ENCODE measurements at regions of chr19 and their contacts with region 1.

Region 1: GRCh38 chr19:45862564-45863334 is at the start of gene SYMPK:
- DNase-seq: peak; percentile 100
- H3K4me3 Mint-ChIP-seq: peak within 1 kb of the TSS; percentile 90
- H3K27ac Mint-ChIP-seq: peak within 1 kb of the TSS; percentile 97
- H3K4me1 Mint-ChIP-seq: peaks cover 24% of the 10 kb centered on the region
- H3K27me3 Mint-ChIP-seq: peaks cover 36% of the 10 kb centered on the region
- total RNA-seq, gene SYMPK: 124 and 131 TPM in 2 replicates

Region 2: DNA sequence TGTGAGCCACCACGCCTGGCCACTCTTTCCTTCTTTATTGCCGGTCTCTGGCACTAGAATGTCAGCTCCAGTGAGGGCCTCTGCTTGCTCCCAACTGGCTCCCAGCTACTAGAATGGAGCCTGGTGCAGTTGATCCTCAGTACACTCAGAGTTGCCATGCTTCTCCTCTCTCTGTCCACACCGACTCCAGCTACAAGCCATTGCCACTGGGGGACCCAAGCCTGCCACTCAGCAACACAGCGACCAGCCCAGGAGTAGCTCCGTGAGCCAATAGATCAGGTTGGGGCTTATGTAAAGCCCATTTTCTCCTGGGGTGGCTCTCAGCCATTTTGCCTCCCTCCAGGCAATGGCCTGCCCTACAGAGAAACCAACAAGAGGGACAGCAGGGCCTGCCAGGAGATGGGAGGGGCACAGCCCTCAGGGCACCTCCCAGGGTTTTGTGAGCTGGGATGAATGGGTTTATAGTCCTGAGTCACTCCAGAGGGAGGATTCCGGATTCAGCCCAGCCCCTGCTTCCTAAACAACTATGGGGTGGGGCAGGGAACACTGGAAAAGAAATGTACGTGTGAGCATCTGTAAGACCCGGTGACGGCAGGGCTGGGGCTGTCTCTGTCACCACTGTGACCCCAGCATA is 314.7 kb before region 1 on chr19:
- intact Hi-C with region 1: no loop called
- DNase-seq: no peak
- H3K4me3 Mint-ChIP-seq: no peak overlapping the region
- H3K27ac Mint-ChIP-seq: no peak overlapping the region
- H3K4me1 Mint-ChIP-seq: peaks cover 6% of the 10 kb centered on the region
- H3K27me3 Mint-ChIP-seq: no peaks in the 10 kb centered on the region

Region 3: DNA sequence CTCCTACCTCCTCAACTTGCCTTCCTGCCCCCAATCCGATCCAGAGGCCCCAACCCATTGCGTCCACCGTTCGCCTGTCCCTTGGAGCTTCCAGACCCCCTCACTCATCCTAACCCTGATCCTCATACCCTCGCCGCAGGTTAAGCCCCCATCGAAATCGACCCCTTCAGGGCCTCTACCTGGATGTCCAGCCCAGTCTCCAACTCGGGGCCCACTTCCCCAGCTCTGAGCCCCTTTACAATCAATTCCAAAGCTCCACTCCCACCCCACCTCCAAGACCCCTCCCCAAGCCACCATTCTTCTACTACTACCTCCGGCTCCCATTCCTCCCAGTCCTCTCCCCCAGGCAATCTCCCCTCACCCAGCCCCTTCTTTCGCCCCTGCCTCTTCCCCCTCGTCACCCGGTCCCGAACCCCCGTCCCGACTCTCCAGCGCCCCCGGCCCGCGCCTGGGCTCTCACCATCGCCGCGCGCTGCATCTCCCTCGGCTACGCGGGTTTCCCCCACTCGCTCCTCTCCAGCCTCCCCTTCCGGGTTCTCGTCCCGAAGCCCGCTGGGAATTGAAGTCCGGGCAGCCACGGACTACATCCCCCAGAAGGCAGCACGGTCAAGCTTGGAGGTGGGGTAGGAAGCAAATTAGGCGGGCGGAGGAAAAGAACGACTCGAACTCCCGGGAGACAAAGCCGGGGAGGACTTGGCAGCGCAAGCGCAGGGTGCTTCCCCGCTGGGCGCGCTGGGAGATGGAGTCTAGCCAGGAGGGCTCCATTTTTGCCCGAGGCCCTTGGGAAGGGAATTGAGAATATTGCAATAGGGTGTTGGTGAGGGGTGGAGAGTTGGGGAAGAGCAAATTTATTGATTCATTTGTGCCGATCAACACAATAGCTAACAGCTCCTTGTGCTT is 132.1 kb before region 1 on chr19 and contains the start of gene FBXO46:
- intact Hi-C with region 1: loop called (anchors 2 kb)
- DNase-seq: peak; percentile 99
- H3K4me3 Mint-ChIP-seq: peak within 1 kb of the TSS; percentile 95
- H3K27ac Mint-ChIP-seq: peak within 1 kb of the TSS; percentile 88
- H3K4me1 Mint-ChIP-seq: peaks cover 25% of the 10 kb centered on the region
- H3K27me3 Mint-ChIP-seq: no peaks in the 10 kb centered on the region
- total RNA-seq, gene FBXO46: 34.2 and 34.7 TPM in 2 replicates

Region 4: DNA sequence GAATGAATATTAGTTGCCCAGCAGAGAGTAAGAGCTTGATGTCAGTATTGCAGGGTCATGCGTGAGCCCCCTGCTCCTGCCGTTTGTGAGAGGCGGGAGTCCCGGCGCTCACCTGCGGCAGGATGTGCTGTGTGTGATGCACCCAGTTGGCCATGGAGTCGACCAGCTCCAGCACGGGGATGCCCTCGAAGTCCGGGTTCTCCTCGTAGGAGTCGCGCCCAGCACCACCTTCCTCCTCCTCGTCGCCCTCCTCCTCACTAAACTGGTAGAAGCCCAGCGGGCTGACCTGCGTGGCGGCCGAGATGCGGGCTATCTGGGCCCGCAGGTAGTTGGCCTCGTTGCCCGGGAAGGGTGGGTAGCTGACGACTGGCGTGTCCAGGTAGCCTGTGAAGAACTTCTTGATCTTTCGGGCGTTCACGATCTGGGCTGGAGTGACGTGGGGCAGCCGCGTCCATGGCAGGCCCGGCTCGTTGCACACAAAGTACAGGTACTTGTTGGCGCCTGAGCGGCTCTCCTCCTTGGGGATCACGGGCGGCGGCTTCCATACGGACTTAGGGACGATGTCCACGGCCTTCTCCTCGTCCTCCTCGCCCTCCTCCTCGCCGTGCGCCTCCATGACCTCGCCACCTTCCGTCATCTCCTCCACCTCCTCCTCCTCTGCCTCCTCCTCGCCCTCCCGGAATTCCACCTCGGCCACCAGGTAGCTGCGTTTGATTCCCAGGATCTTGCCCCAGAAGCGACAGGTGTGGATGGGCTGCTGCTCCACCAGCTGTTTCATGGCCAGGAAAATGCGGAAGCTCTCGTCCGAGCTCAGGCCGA is 58.4 kb before region 1 on chr19:
- intact Hi-C with region 1: no loop called
- DNase-seq: no peak
- H3K4me3 Mint-ChIP-seq: no peak overlapping the region
- H3K27ac Mint-ChIP-seq: no peak overlapping the region
- H3K4me1 Mint-ChIP-seq: peaks cover 4% of the 10 kb centered on the region
- H3K27me3 Mint-ChIP-seq: peaks cover 27% of the 10 kb centered on the region

Region 5: DNA sequence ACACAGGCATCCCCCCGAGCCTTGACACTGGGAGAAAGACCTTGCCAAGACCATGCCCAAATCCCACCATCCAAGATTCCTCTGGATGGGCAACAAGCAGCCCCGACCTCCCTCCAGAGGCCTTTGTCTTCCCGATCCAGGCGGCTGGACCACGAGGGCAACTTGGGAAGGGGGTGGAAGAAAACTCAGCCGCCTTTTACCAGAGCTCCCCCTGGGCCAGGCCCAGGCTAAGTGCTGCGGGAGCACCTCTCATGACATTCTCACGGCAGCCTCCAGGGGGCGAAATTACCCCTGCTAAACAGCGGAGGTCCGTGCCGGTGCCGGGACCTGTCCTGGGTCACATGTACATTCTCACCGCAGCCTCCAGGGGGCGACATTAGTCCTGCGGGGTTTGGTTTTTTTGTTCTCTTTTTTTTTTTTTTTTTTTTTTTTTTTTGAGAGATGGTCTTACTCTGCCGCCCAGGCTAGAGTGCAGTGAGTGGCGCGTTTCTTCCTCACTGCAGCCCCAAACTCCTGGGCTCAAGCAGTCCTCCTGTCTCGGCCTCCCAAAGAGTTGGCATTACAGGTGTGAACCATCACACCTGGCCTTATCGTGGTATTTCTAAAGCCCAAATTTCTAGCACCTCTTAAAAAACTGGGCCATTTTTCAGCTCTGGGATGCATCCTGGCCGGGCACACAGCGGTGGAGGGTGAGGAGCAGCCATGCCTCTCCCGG is 45.6 kb before region 1 on chr19:
- intact Hi-C with region 1: loop called (anchors 5 kb)
- DNase-seq: peak; percentile 98
- H3K4me3 Mint-ChIP-seq: no peak overlapping the region
- H3K27ac Mint-ChIP-seq: no peak overlapping the region
- H3K4me1 Mint-ChIP-seq: peaks cover 3% of the 10 kb centered on the region
- H3K27me3 Mint-ChIP-seq: no peaks in the 10 kb centered on the region

Region 6: GRCh38 chr19:45960595-45961235 is 98.0 kb after region 1 on chr19:
- intact Hi-C with region 1: no loop called
- DNase-seq: no peak
- H3K4me3 Mint-ChIP-seq: no peak overlapping the region
- H3K27ac Mint-ChIP-seq: no peak overlapping the region
- H3K4me1 Mint-ChIP-seq: peaks cover 2% of the 10 kb centered on the region
- H3K27me3 Mint-ChIP-seq: peaks cover 37% of the 10 kb centered on the region

Region 7: GRCh38 chr19:45994989-45995714 is 132.4 kb after region 1 on chr19 and contains the start of gene CCDC61:
- intact Hi-C with region 1: loop called (anchors 1 kb)
- DNase-seq: peak; percentile 99
- H3K4me3 Mint-ChIP-seq: no peak within 1 kb of the TSS
- H3K27ac Mint-ChIP-seq: no peak within 1 kb of the TSS
- H3K4me1 Mint-ChIP-seq: peaks cover 20% of the 10 kb centered on the region
- H3K27me3 Mint-ChIP-seq: peaks cover 6% of the 10 kb centered on the region
- total RNA-seq, gene CCDC61: 23.1 and 30.1 TPM in 2 replicates